Left ventricle myocardium inferior (tissue), 1 donor: ENCODE measurements at regions of chr1 and their contacts with region 1.

Region 1: GRCh38 chr1:23539698-23540266 is 8.7 kb upstream of the E2F2 start:
- DNase-seq: peak; percentile 85
- H3K4me3 ChIP-seq: peak overlapping the region; percentile 30
- H3K27ac ChIP-seq: no peak overlapping the region
- H3K4me1 ChIP-seq: peaks cover 11% of the 10 kb centered on the region
- H3K27me3 ChIP-seq: no peaks in the 10 kb centered on the region
- CTCF ChIP-seq: peak; percentile 96

Region 2: GRCh38 chr1:23496490-23497181 is 43.1 kb before region 1 on chr1:
- intact Hi-C with region 1: loop called (anchors 5 kb)
- DNase-seq: no peak
- H3K4me3 ChIP-seq: no peak overlapping the region
- H3K27ac ChIP-seq: no peak overlapping the region
- H3K4me1 ChIP-seq: no peaks in the 10 kb centered on the region
- H3K27me3 ChIP-seq: no peaks in the 10 kb centered on the region
- CTCF ChIP-seq: no peak

Region 3: GRCh38 chr1:23636009-23636408 is 96.2 kb after region 1 on chr1:
- intact Hi-C with region 1: loop called (anchors 2 kb)
- DNase-seq: no peak
- H3K4me3 ChIP-seq: no peak overlapping the region
- H3K27ac ChIP-seq: peak overlapping the region; percentile 86
- H3K4me1 ChIP-seq: peaks cover 48% of the 10 kb centered on the region
- H3K27me3 ChIP-seq: no peaks in the 10 kb centered on the region
- CTCF ChIP-seq: no peak

Region 4: DNA sequence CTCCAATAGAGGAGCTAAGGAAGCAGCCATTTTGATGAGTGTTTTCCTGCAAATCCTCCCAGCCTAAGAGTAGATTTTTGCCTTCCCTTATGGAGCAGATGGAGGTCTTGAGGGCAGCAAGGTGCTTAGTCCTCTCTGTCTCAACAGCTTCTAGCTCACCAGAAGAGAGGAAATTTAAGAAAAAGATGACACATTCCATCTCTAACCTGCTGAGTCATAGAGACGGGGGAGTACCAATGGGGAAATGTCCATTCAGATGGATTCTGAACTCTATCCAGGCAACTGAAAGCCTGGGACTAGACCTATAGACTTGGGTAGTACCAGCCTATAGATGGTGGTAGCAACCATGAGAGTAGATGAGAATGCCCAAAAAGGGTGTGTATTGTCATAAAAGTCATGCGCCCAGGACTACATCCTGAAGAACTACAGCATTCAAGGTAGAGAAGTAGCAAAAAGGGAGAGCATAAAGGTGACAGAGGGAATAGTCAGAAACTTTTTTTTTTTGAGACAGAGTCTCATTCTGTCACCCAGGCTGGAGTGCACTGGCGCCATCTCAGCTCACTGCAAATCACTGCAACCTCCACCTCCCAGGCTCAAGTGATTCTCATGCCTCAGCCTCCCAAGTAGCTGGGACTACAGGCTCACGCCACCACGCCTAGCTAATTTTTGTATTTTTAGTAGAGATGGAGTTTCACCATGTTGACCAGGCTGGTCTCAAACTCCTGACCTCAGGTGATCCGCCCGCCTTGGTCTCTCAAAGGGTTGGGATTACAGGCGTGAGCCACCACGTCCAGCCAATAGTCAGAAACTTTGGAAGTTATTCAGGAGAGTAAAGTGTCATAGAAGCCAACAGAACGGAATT is 192.8 kb after region 1 on chr1:
- intact Hi-C with region 1: no loop called
- DNase-seq: no peak
- H3K4me3 ChIP-seq: no peak overlapping the region
- H3K27ac ChIP-seq: no peak overlapping the region
- H3K4me1 ChIP-seq: peaks cover 5% of the 10 kb centered on the region
- H3K27me3 ChIP-seq: no peaks in the 10 kb centered on the region
- CTCF ChIP-seq: no peak